Endothelial cell of umbilical vein (primary cell): ENCODE measurements at regions of chr18 and their contacts with region 1.

Region 1: GRCh38 chr18:50356036-50356945 is 18.6 kb upstream of the SKA1 start:
- DNase-seq: peak; percentile 30
- H3K4me3 ChIP-seq: no peak overlapping the region
- H3K27ac ChIP-seq: no peak overlapping the region
- H3K4me1 ChIP-seq: peaks cover 4% of the 10 kb centered on the region
- H3K27me3 ChIP-seq: peaks cover 10 to 14% of the 10 kb centered on the region in 2 experiments
- CTCF ChIP-seq: peak in 1 of 2 donors; percentile 4
- POLR2A ChIP-seq: no peak

Region 2: GRCh38 chr18:50128506-50129271 is 227.6 kb before region 1 on chr18:
- CTCF ChIA-PET with region 1: no interaction called
- POLR2A ChIA-PET with region 1: no interaction called
- dilution Hi-C with region 1: no loop called
- intact Hi-C with region 1: no loop called
- DNase-seq: no peak
- H3K4me3 ChIP-seq: no peak overlapping the region
- H3K27ac ChIP-seq: no peak overlapping the region
- H3K4me1 ChIP-seq: no peaks in the 10 kb centered on the region
- H3K27me3 ChIP-seq: no peaks in the 10 kb centered on the region
- CTCF ChIP-seq: no peak
- POLR2A ChIP-seq: no peak

Region 3: GRCh38 chr18:50203801-50204604 is 152.3 kb before region 1 on chr18:
- CTCF ChIA-PET with region 1: interaction called, 43 read pairs
- POLR2A ChIA-PET with region 1: no interaction called
- dilution Hi-C with region 1: no loop called
- intact Hi-C with region 1: loop called (anchors 5 kb)
- DNase-seq: peak; percentile 24
- H3K4me3 ChIP-seq: no peak overlapping the region
- H3K27ac ChIP-seq: no peak overlapping the region
- H3K4me1 ChIP-seq: no peaks in the 10 kb centered on the region
- H3K27me3 ChIP-seq: peaks cover 0 to 10% of the 10 kb centered on the region in 2 experiments
- CTCF ChIP-seq: peak; percentile 50 to 66
- POLR2A ChIP-seq: no peak

Region 4: DNA sequence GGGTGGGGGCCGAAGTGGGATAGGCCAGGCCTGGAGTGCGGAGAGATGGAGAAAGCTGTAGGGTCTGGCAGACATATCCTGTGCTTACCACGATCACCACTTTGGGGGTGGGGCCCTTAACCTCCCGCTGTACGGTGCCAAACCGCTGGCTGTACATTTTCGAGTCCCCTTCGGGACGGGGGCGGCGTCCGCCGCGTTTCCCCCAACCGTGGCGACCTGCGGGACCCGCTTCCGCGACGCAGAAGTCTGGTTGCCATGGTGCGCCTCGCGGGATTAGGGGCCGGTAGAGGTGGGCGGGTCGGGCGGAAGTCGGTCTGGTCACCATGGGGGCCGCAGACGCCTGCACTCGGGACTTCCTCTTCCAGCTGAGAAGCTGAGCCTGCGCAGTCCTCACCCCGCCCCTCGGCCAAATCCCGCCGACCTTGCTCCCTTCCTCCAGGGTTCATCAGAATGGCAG is 90.0 kb before region 1 on chr18 and contains the start of gene CFAP53:
- CTCF ChIA-PET with region 1: interaction called, 26 read pairs
- POLR2A ChIA-PET with region 1: no interaction called
- dilution Hi-C with region 1: no loop called
- intact Hi-C with region 1: loop called (anchors 1 kb)
- DNase-seq: peak; percentile 89
- H3K4me3 ChIP-seq: peak within 1 kb of the TSS; percentile 14 to 58 (median 36)
- H3K27ac ChIP-seq: no peak within 1 kb of the TSS
- H3K4me1 ChIP-seq: peaks cover 10% of the 10 kb centered on the region
- H3K27me3 ChIP-seq: peaks cover 1 to 18% of the 10 kb centered on the region in 2 experiments
- CTCF ChIP-seq: no peak
- POLR2A ChIP-seq: no peak
- total RNA-seq, gene CFAP53: 0.16 and 0.18 TPM in 2 replicates

Region 5: GRCh38 chr18:50287441-50288347 is 68.6 kb before region 1 on chr18 and contains the start of gene CXXC1:
- CTCF ChIA-PET with region 1: interaction called, 14 read pairs
- POLR2A ChIA-PET with region 1: no interaction called
- dilution Hi-C with region 1: no loop called
- intact Hi-C with region 1: no loop called
- DNase-seq: peak; percentile 100
- H3K4me3 ChIP-seq: peak within 1 kb of the TSS; percentile 76 to 88 (median 78)
- H3K27ac ChIP-seq: peak within 1 kb of the TSS; percentile 33
- H3K4me1 ChIP-seq: peaks cover 5% of the 10 kb centered on the region
- H3K27me3 ChIP-seq: peaks cover 0 to 1% of the 10 kb centered on the region in 2 experiments
- CTCF ChIP-seq: peak; percentile 35 to 69
- POLR2A ChIP-seq: peak; percentile 77
- total RNA-seq, gene CXXC1: 64.4 and 66.9 TPM in 2 replicates

Region 6: DNA sequence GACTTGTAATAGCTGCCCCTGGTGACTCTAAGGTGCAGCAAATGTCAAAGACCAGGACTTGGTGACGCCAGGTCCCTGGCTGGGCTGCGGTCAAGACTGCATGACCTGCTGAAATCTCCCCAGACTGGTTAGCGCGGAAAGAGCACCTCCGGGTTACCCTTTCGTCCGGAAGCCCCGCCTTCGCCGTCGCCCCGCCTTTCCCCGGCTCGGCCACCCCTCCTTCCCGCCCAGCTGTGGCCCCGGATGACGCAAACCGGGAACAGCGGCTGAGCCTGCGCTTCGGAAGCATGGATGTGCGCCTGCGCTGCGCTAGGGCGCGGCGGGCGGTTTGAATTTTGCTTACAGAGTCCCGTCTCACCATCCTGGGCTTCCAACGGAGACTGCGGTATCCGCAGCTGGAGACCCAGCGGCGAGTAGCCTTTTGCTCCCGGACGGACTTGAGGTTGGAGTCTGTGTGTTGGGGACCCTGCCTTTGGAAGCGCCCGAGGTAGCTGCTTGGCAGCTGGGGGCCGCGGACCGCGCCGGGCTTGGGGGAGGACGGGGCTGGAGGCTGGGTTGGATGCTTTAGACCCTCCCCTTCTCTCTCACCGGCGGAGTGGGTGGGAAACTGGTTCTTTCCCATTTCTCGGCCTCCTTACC is 18.6 kb after region 1 on chr18 and contains the start of gene SKA1:
- CTCF ChIA-PET with region 1: interaction called, 17 read pairs
- POLR2A ChIA-PET with region 1: no interaction called
- dilution Hi-C with region 1: no loop called
- intact Hi-C with region 1: no loop called
- DNase-seq: peak; percentile 95
- H3K4me3 ChIP-seq: peak within 1 kb of the TSS; percentile 49 to 88 (median 58)
- H3K27ac ChIP-seq: peak within 1 kb of the TSS; percentile 21
- H3K4me1 ChIP-seq: peaks cover 9% of the 10 kb centered on the region
- H3K27me3 ChIP-seq: peaks cover 0 to 3% of the 10 kb centered on the region in 2 experiments
- CTCF ChIP-seq: no peak
- POLR2A ChIP-seq: peak; percentile 79
- total RNA-seq, gene SKA1: 21.9 and 23.9 TPM in 2 replicates